CD4-positive, alpha-beta T cell (primary cell): ENCODE measurements at regions of chr14 and their contacts with region 1.

Region 1: GRCh38 chr14:34629657-34630529 is at the start of gene SNX6:
- DNase-seq: peak; percentile 73 to 94 (median 81)
- ATAC-seq: peak; percentile 96
- H3K4me3 ChIP-seq: peak within 1 kb of the TSS; percentile 96
- H3K4me3 Mint-ChIP-seq: peak within 1 kb of the TSS; percentile 95
- H3K27ac ChIP-seq: peak within 1 kb of the TSS; percentile 86 to 89
- H3K27ac Mint-ChIP-seq: peak within 1 kb of the TSS; percentile 88
- H3K4me1 ChIP-seq: peaks cover 39% of the 10 kb centered on the region
- H3K4me1 Mint-ChIP-seq: peaks cover 27% of the 10 kb centered on the region
- H3K27me3 ChIP-seq: no peaks in the 10 kb centered on the region
- H3K27me3 Mint-ChIP-seq: no peaks in the 10 kb centered on the region
- CTCF ChIP-seq: no peak
- total RNA-seq, gene SNX6: 51.5 to 55.8 TPM

Region 2: DNA sequence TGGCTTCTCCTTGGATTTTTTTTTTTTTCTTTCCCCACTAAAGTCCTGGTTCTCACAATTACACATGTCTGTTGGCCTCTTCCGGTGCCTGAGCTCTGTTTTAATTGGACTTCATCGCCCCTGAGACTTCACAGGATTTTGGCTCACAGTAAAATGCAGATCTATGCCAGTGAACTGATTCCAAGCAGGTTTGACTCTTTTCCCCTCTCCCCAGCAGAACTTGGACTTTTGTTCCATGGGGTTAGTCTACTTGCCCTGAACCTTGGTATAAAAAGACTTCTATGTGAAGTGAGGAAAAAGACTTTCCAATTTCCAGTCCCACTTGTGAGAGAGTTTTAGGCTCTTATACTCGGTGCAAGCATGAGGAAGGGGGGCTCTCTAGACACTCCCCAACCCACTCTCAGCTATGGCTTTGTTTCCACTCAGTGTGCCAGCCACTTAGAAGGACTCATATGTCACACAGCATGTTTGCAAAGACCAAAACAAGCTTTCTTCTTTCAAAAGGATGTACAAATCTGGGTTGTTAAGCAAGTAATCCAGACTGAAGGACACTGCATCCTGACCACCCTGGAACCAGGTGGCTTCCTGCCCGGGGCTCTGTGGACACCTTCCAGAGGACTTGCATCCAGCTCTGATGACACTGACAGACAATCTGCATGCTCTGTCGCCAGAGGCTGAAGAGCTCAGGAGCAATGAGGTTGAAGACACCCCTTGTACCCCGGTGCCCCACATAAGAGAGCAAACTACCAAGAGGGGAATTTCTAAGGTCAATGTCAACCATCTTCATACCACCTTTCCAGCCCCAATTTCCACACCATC is 457.1 kb before region 1 on chr14:
- CTCF ChIA-PET with region 1: no interaction called
- POLR2A ChIA-PET with region 1: no interaction called
- intact Hi-C with region 1: no loop called
- DNase-seq: no peak
- ATAC-seq: no peak
- H3K4me3 ChIP-seq: no peak overlapping the region
- H3K4me3 Mint-ChIP-seq: no peak overlapping the region
- H3K27ac ChIP-seq: no peak overlapping the region
- H3K27ac Mint-ChIP-seq: no peak overlapping the region
- H3K4me1 ChIP-seq: no peaks in the 10 kb centered on the region
- H3K4me1 Mint-ChIP-seq: no peaks in the 10 kb centered on the region
- H3K27me3 ChIP-seq: no peaks in the 10 kb centered on the region
- H3K27me3 Mint-ChIP-seq: no peaks in the 10 kb centered on the region
- CTCF ChIP-seq: no peak

Region 3: DNA sequence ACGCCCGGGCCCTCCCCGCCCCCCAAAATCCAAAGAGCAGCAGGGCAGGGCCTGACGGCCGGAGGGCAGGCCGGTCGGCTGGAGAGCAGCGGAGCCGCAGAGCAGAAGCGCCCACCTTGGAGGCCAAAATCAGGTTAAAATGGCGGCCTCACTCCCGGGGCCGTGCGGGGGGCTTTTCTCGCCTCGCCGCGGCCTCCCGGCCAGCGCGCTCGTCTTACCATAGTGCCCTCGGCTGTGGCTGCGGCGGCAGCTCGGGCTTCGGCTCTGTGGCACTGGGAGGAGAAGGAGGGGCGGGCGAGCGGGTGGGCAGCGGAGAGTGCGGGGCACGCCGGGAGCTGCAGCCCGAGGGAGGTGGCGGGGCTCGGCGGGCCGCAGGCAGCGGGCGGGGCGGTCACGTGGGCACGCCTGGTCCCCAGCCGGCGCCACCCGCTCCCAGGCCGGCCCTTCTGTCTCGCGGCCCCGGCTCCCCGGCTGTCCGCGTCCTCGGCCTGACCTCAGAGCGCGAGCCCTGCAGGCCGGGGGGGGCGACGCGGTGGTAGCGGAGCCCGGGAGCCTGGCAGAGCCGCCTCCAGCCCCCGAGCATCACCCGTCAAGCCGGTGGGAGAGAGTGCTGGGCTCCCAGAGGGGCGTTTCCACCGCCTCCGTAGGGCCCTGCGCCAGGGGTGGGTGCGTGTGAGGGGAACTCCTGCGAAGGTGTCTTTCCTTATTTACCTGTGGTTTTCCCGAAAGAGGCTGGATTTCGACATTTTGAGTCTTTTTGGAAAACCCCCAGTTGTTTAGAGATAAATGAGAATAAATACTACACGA is 84.6 kb after region 1 on chr14 and contains the start of gene CFL2:
- CTCF ChIA-PET with region 1: no interaction called
- POLR2A ChIA-PET with region 1: interaction called, 11 read pairs
- intact Hi-C with region 1: loop called in 1 of 2 experiments (anchors 5 kb)
- DNase-seq: peak; percentile 34 to 92 (median 61)
- ATAC-seq: peak; percentile 87
- H3K4me3 ChIP-seq: peak within 1 kb of the TSS; percentile 78
- H3K4me3 Mint-ChIP-seq: peak within 1 kb of the TSS; percentile 94
- H3K27ac ChIP-seq: peak within 1 kb of the TSS; percentile 31 to 52
- H3K27ac Mint-ChIP-seq: peak within 1 kb of the TSS; percentile 90
- H3K4me1 ChIP-seq: peaks cover 9% of the 10 kb centered on the region
- H3K4me1 Mint-ChIP-seq: peaks cover 31% of the 10 kb centered on the region
- H3K27me3 ChIP-seq: no peaks in the 10 kb centered on the region
- H3K27me3 Mint-ChIP-seq: no peaks in the 10 kb centered on the region
- CTCF ChIP-seq: no peak
- total RNA-seq, gene CFL2: 36.4 to 37.9 TPM

Region 4: DNA sequence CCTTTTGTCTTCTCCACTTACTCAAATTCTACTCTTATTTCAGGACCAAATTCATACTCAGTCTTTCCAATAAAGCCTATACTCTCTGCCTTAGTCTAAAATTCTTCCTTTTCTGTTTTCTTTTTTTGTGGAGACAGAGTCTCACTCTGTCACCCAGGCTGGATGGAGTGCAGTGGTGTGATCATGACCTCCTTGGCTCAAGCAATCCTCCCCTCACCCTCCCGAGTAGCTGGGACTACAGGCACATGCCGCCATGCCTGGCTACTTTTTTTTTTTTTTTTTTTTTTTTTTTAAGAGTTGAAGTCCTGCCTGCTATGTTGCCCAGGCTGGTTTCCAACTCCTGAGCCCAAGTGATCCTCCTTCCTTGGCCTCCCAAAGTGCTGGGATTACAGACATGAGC is 364.8 kb after region 1 on chr14:
- CTCF ChIA-PET with region 1: no interaction called
- POLR2A ChIA-PET with region 1: no interaction called
- intact Hi-C with region 1: loop called in 1 of 2 experiments (anchors 5 kb)
- DNase-seq: no peak
- ATAC-seq: no peak
- H3K4me3 ChIP-seq: no peak overlapping the region
- H3K4me3 Mint-ChIP-seq: no peak overlapping the region
- H3K27ac ChIP-seq: no peak overlapping the region
- H3K27ac Mint-ChIP-seq: peak overlapping the region; percentile 32
- H3K4me1 ChIP-seq: no peaks in the 10 kb centered on the region
- H3K4me1 Mint-ChIP-seq: peaks cover 38% of the 10 kb centered on the region
- H3K27me3 ChIP-seq: no peaks in the 10 kb centered on the region
- H3K27me3 Mint-ChIP-seq: no peaks in the 10 kb centered on the region
- CTCF ChIP-seq: no peak